Mammary epithelial cell (primary cell): ENCODE measurements at regions of chr2 and their contacts with region 1.

Region 1: GRCh38 chr2:73080711-73081131 is 9.2 kb upstream of the SFXN5 start:
- DNase-seq: no peak
- H3K4me3 ChIP-seq: no peak overlapping the region
- H3K27ac ChIP-seq: no peak overlapping the region
- H3K4me1 ChIP-seq: no peaks in the 10 kb centered on the region
- H3K27me3 ChIP-seq: no peaks in the 10 kb centered on the region
- CTCF ChIP-seq: no peak

Region 2: GRCh38 chr2:73156539-73157124 is 75.9 kb after region 1 on chr2:
- CTCF ChIA-PET with region 1: interaction called, 4 read pairs
- dilution Hi-C with region 1: loop called (anchors 5 kb)
- in situ Hi-C with region 1: loop called in 1 of 2 experiments (anchors 5 kb)
- intact Hi-C with region 1: loop called (anchors 1 kb)
- DNase-seq: peak; percentile 24
- H3K4me3 ChIP-seq: peak overlapping the region in 1 of 3 experiments; percentile 36
- H3K27ac ChIP-seq: no peak overlapping the region
- H3K4me1 ChIP-seq: no peaks in the 10 kb centered on the region
- H3K27me3 ChIP-seq: no peaks in the 10 kb centered on the region
- CTCF ChIP-seq: peak; percentile 76 to 86